AG04449 (cell line): ENCODE measurements at regions of chr17 and their contacts with region 1.

Region 1: DNA sequence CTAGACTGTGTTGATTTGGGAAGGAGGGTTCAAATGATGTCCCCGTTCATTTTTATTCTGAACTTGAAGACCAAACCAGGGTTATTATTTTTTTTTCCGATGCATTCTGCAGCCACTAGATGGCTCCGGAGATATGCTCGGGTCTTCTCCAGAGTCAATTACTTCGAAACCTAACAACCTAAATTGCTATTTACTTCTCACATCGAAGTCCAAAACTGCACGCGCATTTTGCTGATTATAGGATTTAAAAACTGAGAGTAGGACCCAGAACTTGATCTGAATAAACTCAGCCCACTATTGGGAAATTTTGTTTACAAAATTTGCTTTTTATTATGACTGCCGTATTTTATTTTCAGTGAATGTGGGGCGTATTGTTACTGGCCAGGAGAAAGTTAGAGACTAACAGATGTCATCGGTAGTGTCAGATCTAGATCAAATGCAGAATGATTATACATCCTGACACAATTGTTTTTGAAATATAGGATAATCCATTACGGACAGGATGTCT is 263.8 kb downstream of the HS3ST3A1 start:
- DNase-seq: no peak
- H3K4me3 ChIP-seq: peak overlapping the region; percentile 43
- CTCF ChIP-seq: peak; percentile 59

Region 2: DNA sequence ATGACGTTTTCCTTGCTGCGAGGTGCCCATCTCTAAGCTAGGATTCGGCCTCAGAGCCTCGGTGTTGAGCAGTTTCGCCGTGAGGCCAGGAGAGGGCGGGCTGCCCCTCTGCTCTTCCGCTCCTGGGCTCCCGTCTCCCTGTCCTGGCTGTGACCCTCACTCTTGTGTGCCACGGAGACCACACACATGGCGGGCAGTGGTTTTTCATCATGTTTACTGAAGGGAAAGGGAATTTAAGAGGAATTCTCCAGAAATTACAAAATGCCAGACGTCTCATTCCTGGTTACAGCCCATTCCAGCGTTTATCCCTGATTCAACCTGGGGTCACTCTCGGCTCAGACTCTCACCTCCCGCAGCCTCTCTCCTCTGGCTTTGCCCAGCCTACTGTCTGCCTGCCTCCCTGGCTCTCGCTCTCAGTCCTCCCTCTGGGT is 223.3 kb before region 1 on chr17:
- CTCF ChIA-PET with region 1: interaction called, 12 read pairs
- POLR2A ChIA-PET with region 1: no interaction called
- DNase-seq: peak; percentile 77
- H3K4me3 ChIP-seq: peak overlapping the region; percentile 13
- CTCF ChIP-seq: peak; percentile 99

Region 3: DNA sequence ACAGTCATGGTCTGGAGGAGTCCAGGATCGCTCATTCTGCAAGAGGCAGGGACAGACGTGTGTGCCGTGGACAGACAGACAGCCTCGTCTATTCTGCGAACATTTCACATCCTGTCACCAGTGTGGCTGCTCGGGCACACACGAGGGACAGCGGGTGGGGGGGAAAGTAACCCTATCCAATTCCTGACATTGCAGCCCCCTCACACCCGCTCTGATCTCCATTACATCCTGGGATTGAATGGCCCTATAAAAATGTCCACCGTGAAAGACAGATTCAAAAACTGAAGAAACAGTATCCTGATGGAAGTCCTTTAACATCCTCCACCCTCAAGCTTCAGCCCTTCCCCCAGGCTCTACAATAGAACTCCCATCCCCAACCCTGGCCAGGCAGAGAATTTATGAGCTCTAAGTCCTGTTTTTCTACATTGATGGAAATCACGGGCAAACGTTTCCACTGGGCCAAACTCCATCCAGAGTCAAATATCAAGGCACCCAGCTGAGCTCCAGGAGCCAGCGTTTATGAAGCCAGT is 224.4 kb after region 1 on chr17:
- CTCF ChIA-PET with region 1: interaction called, 14 read pairs
- POLR2A ChIA-PET with region 1: no interaction called
- DNase-seq: peak; percentile 81
- H3K4me3 ChIP-seq: peak overlapping the region; percentile 29; the same call in 1 of the 2 replicates
- CTCF ChIP-seq: no peak

Region 4: GRCh38 chr17:13594762-13595598 is 257.1 kb after region 1 on chr17:
- CTCF ChIA-PET with region 1: interaction called, 34 read pairs
- POLR2A ChIA-PET with region 1: no interaction called
- DNase-seq: peak; percentile 57
- H3K4me3 ChIP-seq: no peak overlapping the region
- CTCF ChIP-seq: peak; percentile 79